BJ (cell line): ENCODE measurements at regions of chr6 and their contacts with region 1.

Region 1: GRCh38 chr6:125114248-125114858 is 39.2 kb upstream of the TPD52L1 start:
- DNase-seq: no peak
- H3K4me3 ChIP-seq: no peak overlapping the region
- H3K27me3 ChIP-seq: no peaks in the 10 kb centered on the region
- CTCF ChIP-seq: peak; percentile 78

Region 2: DNA sequence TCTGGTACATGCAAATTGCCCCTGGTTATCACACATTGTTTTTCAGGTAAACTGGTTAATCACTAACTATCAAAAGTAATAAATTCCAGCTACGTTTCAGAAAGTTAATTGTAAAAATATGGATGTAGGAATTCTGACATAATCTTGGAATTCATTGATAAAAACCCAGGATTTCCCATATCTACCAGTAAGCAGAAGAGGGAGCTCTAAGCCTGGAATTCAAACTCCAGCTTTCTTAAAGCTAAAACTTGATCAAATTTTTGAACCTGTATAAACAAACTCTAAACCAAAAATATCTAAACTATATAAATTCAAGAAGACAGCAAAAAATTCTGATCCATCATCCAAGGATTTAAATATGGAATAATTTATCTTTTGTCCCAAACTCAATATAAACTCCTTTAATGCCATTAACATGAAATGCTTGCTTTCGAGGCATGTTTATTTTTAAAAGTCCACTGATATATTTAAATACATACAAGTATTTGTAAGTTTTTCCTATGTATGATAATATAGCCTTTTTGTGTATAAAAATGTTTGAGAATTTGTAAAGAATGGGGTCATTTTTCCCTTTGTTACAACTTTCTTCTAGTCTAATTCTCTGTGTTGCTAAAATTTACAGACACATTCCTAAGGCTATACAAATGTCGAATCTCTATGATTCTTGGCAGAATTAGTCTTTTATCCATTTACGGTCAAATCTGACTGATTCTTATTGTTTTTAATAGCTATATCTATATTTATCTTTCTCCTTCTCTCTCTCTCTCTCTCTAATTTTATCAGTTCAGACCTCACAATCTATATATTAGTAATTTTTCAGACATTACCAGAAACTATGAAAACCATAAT is 243.5 kb before region 1 on chr6:
- CTCF ChIA-PET with region 1: interaction called, 62 read pairs
- POLR2A ChIA-PET with region 1: no interaction called
- DNase-seq: no peak
- H3K4me3 ChIP-seq: no peak overlapping the region
- H3K27me3 ChIP-seq: no peaks in the 10 kb centered on the region
- CTCF ChIP-seq: peak; percentile 63

Region 3: GRCh38 chr6:124879110-124880011 is 235.0 kb before region 1 on chr6:
- CTCF ChIA-PET with region 1: interaction called, 62 read pairs
- POLR2A ChIA-PET with region 1: no interaction called
- DNase-seq: no peak
- H3K4me3 ChIP-seq: no peak overlapping the region
- H3K27me3 ChIP-seq: no peaks in the 10 kb centered on the region
- CTCF ChIP-seq: no peak

Region 4: DNA sequence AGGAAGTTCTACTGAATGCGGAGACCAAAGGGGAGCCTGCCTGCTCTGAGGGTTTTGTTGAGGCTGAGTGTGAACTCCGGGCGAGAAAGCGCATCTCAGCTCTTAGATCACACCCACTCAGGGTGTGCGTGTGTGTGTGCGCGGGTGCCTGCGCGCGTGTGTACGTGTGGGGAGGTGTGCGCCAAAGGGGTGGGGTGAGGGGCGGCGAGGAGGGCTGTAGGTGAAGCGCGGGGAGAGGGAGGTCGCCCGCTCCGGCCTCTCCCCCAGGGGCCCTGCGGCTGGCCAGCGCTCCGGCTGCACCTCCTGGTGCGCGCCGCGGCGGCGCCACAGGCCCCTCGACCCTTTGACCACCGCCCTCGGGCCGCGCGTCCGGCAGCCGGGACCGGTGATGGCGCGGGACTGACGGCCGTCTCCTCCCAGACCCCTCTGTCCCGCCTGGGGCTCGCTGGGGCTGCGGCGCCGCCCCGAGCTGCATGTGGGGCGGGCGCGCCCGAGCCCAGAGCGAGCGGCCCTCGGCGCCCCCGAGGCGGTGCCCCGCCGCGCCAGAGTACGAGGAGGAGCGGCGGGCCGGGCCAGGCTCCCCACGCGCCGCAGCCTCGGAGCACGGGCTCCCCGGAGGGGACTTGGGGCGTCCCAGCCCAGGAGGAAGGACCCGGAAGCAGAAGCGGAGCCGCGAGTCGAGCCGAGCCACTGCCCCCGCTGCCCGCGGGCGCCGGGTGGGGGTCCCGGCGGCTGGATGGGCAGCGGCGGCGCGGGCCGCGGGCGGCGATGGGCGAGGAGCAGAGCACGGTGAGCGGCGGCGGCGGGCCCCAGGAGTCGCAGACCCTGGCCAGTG is 152.4 kb before region 1 on chr6 and contains the start of gene RNF217:
- CTCF ChIA-PET with region 1: interaction called, 28 read pairs
- POLR2A ChIA-PET with region 1: no interaction called
- DNase-seq: no peak
- H3K4me3 ChIP-seq: peak within 1 kb of the TSS; percentile 71
- H3K27me3 ChIP-seq: no peaks in the 10 kb centered on the region
- CTCF ChIP-seq: no peak
- polyA plus RNA-seq, gene RNF217: 18.6 and 29.3 TPM in 2 replicates

Region 5: GRCh38 chr6:125132058-125132457 is 17.7 kb after region 1 on chr6:
- CTCF ChIA-PET with region 1: interaction called, 26 read pairs
- POLR2A ChIA-PET with region 1: interaction called, 12 read pairs
- DNase-seq: no peak
- H3K4me3 ChIP-seq: no peak overlapping the region
- H3K27me3 ChIP-seq: no peaks in the 10 kb centered on the region
- CTCF ChIP-seq: no peak

Region 6: DNA sequence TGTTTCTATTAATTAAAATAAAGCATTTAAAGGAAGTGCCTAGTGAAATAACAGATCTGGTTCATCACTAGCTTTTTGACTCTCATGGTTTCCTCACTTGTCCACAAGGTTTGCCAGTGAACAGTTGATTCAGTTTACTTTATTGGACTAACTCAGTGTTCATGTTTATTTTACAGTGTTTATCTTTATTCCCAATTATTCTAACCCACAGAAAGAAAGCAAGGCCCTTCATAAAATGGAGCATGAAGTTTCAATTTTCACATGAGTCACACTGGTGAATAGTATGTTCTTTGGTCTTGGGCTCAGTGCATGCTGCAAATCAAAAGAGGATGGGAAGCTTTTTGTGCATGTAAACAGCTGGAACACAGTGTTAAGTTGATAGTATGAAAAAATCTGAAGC is 405.0 kb after region 1 on chr6:
- CTCF ChIA-PET with region 1: no interaction called
- POLR2A ChIA-PET with region 1: no interaction called
- DNase-seq: no peak
- H3K4me3 ChIP-seq: no peak overlapping the region
- H3K27me3 ChIP-seq: no peaks in the 10 kb centered on the region
- CTCF ChIP-seq: no peak